CD4-positive, alpha-beta T cell (primary cell): ENCODE measurements at regions of chrX and their contacts with region 1.

Region 1: DNA sequence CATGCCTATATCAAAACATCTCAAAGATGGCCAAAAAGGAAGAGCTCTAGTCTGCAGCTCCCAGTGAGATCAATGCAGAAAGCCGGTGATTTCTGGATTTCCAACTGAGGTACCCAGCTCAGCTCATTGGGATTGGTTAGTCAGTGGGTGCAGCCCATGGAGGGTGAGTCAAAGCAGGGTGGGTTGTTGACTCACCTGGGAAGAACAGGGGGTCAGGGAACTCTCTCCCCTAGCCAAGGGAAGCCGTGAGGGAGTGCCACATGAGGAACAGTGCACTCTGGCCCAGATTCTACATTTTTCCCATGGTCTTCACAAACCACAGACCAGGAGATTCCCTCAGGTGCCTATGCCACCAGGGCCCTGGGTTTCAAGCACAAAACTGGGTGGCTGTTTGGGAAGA is 57.3 kb upstream of the FGF16 start:
- DNase-seq: no peak
- ATAC-seq: no peak
- H3K4me3 ChIP-seq: no peak overlapping the region
- H3K4me3 Mint-ChIP-seq: no peak overlapping the region
- H3K27ac ChIP-seq: no peak overlapping the region
- H3K27ac Mint-ChIP-seq: no peak overlapping the region
- H3K4me1 ChIP-seq: no peaks in the 10 kb centered on the region
- H3K4me1 Mint-ChIP-seq: no peaks in the 10 kb centered on the region
- H3K27me3 ChIP-seq: no peaks in the 10 kb centered on the region
- H3K27me3 Mint-ChIP-seq: no peaks in the 10 kb centered on the region
- CTCF ChIP-seq: no peak

Region 2: GRCh38 chrX:77446029-77446585 is 56.2 kb after region 1 on chrX:
- CTCF ChIA-PET with region 1: no interaction called
- POLR2A ChIA-PET with region 1: no interaction called
- intact Hi-C with region 1: loop called in 1 of 2 experiments (anchors 10 kb)
- DNase-seq: peak in 3 of 14 experiments; percentile 1 to 8 (median 7)
- ATAC-seq: no peak
- H3K4me3 ChIP-seq: peak overlapping the region; percentile 37
- H3K4me3 Mint-ChIP-seq: peak overlapping the region; percentile 85
- H3K27ac ChIP-seq: no peak overlapping the region
- H3K27ac Mint-ChIP-seq: no peak overlapping the region
- H3K4me1 ChIP-seq: peaks cover 17% of the 10 kb centered on the region
- H3K4me1 Mint-ChIP-seq: peaks cover 6% of the 10 kb centered on the region
- H3K27me3 ChIP-seq: peaks cover 10 to 25% of the 10 kb centered on the region in 2 experiments
- H3K27me3 Mint-ChIP-seq: peaks cover 47% of the 10 kb centered on the region
- CTCF ChIP-seq: no peak